Activated CD8-positive, alpha-beta T cell treated with anti-CD3 and anti-CD28 coated beads for 36 hours (primary cell): ENCODE measurements at regions of chr1 and their contacts with region 1.

Region 1: DNA sequence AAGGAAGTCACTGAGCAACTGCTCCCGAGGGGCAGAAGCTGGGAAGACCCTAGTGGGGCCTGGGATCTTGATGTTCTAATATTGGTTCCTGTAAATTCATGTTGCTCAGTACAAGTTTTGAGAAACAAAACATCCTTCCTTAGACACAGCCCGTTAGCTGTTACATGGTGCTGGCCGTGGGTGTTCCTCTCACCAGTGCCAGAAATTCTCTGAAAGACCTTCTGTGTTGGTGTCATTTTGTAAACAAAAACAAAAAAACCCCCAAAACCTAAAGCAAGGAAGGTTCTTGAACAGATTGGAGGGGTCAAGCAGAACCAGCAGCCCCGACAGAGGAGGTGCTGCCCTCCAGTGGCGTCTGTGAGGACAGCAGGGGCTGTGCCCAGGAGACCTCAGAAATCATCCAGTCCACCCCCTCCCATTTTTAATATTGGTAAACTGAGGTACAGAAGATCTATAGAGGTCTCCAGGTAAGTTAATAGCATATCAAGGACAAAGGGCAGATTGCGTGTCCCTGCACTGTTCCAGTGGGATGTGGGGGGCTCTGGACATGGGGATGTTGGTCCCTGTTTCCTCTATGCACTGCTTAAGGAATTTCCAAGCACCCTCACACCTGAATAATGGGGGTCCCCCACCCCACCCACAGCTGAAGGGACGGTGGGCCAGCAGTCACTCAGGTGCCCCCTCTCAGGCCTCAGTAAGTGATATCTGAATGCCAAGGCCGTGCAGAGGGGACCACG is 38.2 kb downstream of the SLC2A7 start:
- DNase-seq: peak; percentile 78
- ATAC-seq: peak; percentile 74
- H3K4me3 Mint-ChIP-seq: peak overlapping the region; percentile 40
- H3K27ac Mint-ChIP-seq: peak overlapping the region; percentile 86
- H3K4me1 Mint-ChIP-seq: peaks cover 42% of the 10 kb centered on the region
- H3K27me3 Mint-ChIP-seq: no peaks in the 10 kb centered on the region
- CTCF ChIP-seq: peak; percentile 100

Region 2: DNA sequence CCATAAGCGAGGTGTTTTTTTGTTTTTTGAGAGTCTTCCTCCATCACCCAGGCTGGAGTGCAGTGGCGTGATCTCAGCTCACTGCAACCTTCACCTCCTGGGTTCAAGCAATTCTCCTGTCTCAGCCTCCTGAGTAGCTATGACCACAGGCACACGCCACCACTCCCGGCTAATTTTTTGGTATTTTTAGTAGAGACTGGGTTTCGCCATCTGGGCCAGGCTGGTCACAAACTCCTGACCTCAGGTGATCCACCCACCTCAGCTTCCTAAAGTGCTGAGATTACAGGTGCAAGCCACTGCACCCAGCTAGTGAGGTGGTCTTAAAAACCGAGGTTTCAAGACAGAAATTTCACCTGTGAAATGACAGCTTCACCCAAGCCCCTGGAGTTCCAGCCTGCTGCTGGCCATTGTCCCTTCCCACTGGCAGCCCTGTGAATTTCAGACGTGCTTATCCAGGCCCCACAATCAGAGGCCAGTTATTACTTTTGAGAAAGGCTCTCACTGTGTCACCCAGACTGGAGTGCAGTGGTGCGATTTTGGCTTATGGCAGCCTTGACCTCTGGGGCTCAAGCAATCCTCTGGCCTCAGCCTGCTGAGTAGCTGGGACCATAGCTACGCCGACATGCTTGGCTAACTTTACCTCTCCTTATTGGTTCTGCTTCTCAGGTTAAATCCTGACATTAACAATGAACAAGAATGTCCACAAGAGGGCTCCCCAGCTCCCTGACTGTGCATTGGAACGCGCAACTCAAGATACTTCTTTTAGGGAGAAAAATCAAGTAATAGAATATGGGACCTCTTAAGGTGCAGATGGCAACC is 129.0 kb before region 1 on chr1:
- CTCF ChIA-PET with region 1: interaction called, 23 read pairs
- POLR2A ChIA-PET with region 1: interaction called, 10 read pairs
- intact Hi-C with region 1: no loop called
- DNase-seq: peak; percentile 74
- ATAC-seq: peak; percentile 54
- H3K4me3 Mint-ChIP-seq: no peak overlapping the region
- H3K27ac Mint-ChIP-seq: peak overlapping the region; percentile 75
- H3K4me1 Mint-ChIP-seq: peaks cover 34% of the 10 kb centered on the region
- H3K27me3 Mint-ChIP-seq: no peaks in the 10 kb centered on the region
- CTCF ChIP-seq: peak; percentile 68

Region 3: GRCh38 chr1:8910914-8911313 is 77.1 kb before region 1 on chr1:
- CTCF ChIA-PET with region 1: interaction called, 29 read pairs
- POLR2A ChIA-PET with region 1: interaction called, 3 read pairs
- intact Hi-C with region 1: no loop called
- DNase-seq: no peak
- ATAC-seq: peak; percentile 57
- H3K4me3 Mint-ChIP-seq: no peak overlapping the region
- H3K27ac Mint-ChIP-seq: peak overlapping the region; percentile 66
- H3K4me1 Mint-ChIP-seq: peaks cover 39% of the 10 kb centered on the region
- H3K27me3 Mint-ChIP-seq: no peaks in the 10 kb centered on the region
- CTCF ChIP-seq: no peak

Region 4: DNA sequence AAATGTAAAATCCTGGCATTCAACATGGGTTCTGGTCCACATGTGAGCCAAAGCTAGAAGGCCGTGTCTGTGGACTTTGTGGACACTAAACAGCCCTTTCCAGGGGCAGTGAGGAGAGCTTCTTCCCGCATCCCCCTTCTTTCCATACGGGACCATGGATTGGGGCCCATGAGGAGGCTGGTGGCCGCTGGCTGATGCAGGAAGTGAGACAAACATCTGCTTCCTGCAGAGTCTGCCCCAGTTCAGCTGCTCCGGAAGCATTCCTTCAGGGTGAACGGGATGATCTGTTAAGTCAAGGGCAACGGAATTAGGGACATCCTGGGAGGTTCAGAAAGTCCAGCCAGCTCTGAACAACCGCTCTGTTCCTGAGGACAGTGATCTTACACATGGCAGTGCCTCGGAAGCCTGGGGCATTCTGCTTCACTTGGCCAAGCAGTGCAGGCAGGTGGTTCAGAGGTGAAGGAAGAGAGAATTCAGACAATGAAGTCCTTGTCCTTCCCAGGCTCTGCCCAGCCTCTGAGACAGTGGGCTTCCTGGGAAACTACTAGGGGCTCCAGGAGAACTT is 40.8 kb before region 1 on chr1:
- CTCF ChIA-PET with region 1: interaction called, 14 read pairs
- POLR2A ChIA-PET with region 1: interaction called, 3 read pairs
- intact Hi-C with region 1: no loop called
- DNase-seq: no peak
- ATAC-seq: peak; percentile 9
- H3K4me3 Mint-ChIP-seq: peak overlapping the region; percentile 50
- H3K27ac Mint-ChIP-seq: peak overlapping the region; percentile 98
- H3K4me1 Mint-ChIP-seq: peaks cover 76% of the 10 kb centered on the region
- H3K27me3 Mint-ChIP-seq: no peaks in the 10 kb centered on the region
- CTCF ChIP-seq: no peak

Region 5: GRCh38 chr1:8970870-8971337 is 17.1 kb before region 1 on chr1:
- CTCF ChIA-PET with region 1: interaction called, 49 read pairs
- POLR2A ChIA-PET with region 1: interaction called, 9 read pairs
- intact Hi-C with region 1: no loop called
- DNase-seq: peak; percentile 85
- ATAC-seq: peak; percentile 83
- H3K4me3 Mint-ChIP-seq: peak overlapping the region; percentile 93
- H3K27ac Mint-ChIP-seq: peak overlapping the region; percentile 100
- H3K4me1 Mint-ChIP-seq: peaks cover 40% of the 10 kb centered on the region
- H3K27me3 Mint-ChIP-seq: no peaks in the 10 kb centered on the region
- CTCF ChIP-seq: no peak

Region 6: GRCh38 chr1:9128520-9129265 is 140.6 kb after region 1 on chr1 and contains the start of gene GPR157:
- CTCF ChIA-PET with region 1: no interaction called
- POLR2A ChIA-PET with region 1: no interaction called
- intact Hi-C with region 1: no loop called
- DNase-seq: peak; percentile 88
- ATAC-seq: peak; percentile 89
- H3K4me3 Mint-ChIP-seq: peak within 1 kb of the TSS; percentile 81
- H3K27ac Mint-ChIP-seq: peak within 1 kb of the TSS; percentile 70
- H3K4me1 Mint-ChIP-seq: peaks cover 38% of the 10 kb centered on the region
- H3K27me3 Mint-ChIP-seq: peaks cover 2% of the 10 kb centered on the region
- CTCF ChIP-seq: no peak
- total RNA-seq, gene GPR157: 3.4 to 4.7 TPM

Region 7: DNA sequence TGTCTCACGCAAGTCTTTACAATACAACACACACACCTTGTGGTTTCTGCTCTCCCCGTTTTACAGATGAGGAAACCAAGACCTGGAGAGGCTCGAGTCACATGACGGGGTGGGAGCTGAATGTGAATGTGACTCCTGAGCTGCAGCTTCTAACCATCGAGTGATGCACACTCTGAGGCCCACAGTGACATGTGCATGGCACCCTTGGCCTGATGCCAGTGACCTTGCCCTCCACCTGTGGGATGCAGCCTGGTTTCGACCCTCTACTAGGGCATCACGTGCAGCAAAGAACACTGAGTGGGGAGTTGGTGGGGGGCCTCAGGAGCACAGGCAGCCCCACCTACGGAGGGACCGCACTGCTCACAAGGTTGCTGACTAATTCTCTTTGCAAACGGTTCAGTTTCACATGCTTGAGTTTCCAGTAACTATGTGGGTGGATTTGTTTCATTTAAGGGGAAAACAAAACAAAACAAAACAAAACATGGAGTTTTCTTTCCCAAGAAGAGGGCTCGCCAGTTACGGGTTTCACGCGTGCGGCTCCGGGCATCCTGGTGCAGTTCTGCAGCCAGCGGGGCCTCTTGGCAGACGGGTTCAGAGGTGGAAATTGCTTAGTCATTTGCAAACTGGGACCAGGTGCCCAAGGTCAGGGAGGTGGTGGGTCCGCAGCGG is 327.5 kb after region 1 on chr1:
- CTCF ChIA-PET with region 1: no interaction called
- POLR2A ChIA-PET with region 1: no interaction called
- intact Hi-C with region 1: no loop called
- DNase-seq: peak; percentile 78
- ATAC-seq: peak; percentile 75
- H3K4me3 Mint-ChIP-seq: no peak overlapping the region
- H3K27ac Mint-ChIP-seq: peak overlapping the region; percentile 73
- H3K4me1 Mint-ChIP-seq: peaks cover 37% of the 10 kb centered on the region
- H3K27me3 Mint-ChIP-seq: peaks cover 1% of the 10 kb centered on the region
- CTCF ChIP-seq: no peak